Endothelial cell of umbilical vein (primary cell): ENCODE measurements at regions of chr5 and their contacts with region 1.

Region 1: DNA sequence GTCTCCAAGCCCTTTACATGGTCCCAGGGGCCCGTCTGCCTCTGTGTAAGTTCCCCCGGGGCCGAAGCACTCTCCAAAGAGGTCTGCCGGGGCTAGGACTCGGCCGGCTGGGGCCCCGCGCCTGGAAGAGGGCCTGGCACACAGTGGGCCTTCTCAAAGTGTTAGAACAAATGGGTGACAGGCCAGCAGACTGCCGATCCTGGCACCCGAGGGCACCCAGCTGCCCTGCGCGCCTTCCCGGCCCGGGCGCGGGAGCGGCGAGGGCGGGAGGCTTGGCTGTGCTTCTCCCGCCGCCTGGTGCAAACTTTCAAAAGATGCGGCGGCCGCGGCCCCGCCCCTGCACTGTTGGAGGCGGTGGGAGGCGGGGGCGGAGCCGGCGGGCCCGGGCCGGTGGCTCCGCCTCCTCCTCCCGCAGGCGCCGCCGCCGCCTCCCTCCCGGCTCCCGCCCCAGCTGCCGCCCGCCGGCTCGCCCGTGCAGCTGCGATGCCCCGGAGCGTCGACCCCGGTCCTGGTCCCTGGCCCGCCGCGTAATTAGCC is at the start of gene NEURL1B:
- DNase-seq: peak; percentile 33
- H3K4me3 ChIP-seq: peak within 1 kb of the TSS; percentile 38 to 54 (median 47)
- H3K27ac ChIP-seq: no peak within 1 kb of the TSS
- H3K4me1 ChIP-seq: peaks cover 7% of the 10 kb centered on the region
- H3K27me3 ChIP-seq: peaks cover 20 to 32% of the 10 kb centered on the region in 2 experiments
- CTCF ChIP-seq: no peak
- POLR2A ChIP-seq: no peak
- total RNA-seq, gene NEURL1B: 0.90 and 1.6 TPM in 2 replicates

Region 2: DNA sequence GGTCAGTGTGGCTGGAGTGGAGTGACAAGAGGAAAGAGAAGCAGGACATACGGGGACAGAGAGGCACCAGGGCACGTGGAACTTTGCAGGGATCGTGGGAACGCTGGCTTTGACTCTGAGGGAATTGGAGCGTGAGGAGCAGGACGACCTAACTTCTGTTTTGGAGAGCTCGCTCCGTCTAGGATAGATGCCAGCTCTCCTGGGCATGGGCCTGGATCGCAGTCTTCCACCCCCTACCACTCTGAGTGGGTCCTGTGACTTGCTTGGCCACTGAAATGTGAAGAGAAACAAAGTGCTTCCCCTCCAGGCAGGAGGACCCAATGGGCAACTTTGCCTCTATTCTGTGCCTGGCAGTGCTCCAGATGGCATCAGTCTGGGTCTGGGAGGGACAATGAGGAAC is 177.9 kb before region 1 on chr5:
- CTCF ChIA-PET with region 1: no interaction called
- POLR2A ChIA-PET with region 1: no interaction called
- dilution Hi-C with region 1: no loop called
- intact Hi-C with region 1: loop called (anchors 5 kb)
- DNase-seq: no peak
- H3K4me3 ChIP-seq: no peak overlapping the region
- H3K27ac ChIP-seq: no peak overlapping the region
- H3K4me1 ChIP-seq: peaks cover 5% of the 10 kb centered on the region
- H3K27me3 ChIP-seq: peaks cover 3 to 5% of the 10 kb centered on the region in 2 experiments
- CTCF ChIP-seq: no peak
- POLR2A ChIP-seq: no peak

Region 3: GRCh38 chr5:172697123-172698121 is 56.5 kb after region 1 on chr5:
- CTCF ChIA-PET with region 1: no interaction called
- POLR2A ChIA-PET with region 1: no interaction called
- dilution Hi-C with region 1: no loop called
- intact Hi-C with region 1: loop called (anchors 1 kb)
- DNase-seq: peak; percentile 82
- H3K4me3 ChIP-seq: peak overlapping the region; percentile 8 to 47 (median 36)
- H3K27ac ChIP-seq: no peak overlapping the region
- H3K4me1 ChIP-seq: peaks cover 5% of the 10 kb centered on the region
- H3K27me3 ChIP-seq: peaks cover 6 to 11% of the 10 kb centered on the region in 2 experiments
- CTCF ChIP-seq: peak; percentile 87 to 91
- POLR2A ChIP-seq: no peak